ENCODE measurements at regions of chr9 and their contacts with region 1.

Region 1: GRCh38 chr9:94681508-94681907 is 42.2 kb upstream of the FBP1 start:
- DNase-seq: peak; percentile 62
- H3K4me3 ChIP-seq: no peak overlapping the region
- H3K27ac ChIP-seq: no peak overlapping the region
- H3K27me3 ChIP-seq: no peaks in the 10 kb centered on the region
- CTCF ChIP-seq: peak; percentile 78

Region 2: GRCh38 chr9:94697972-94698581 is 16.6 kb after region 1 on chr9:
- CTCF ChIA-PET with region 1: interaction called, 13 read pairs
- POLR2A ChIA-PET with region 1: no interaction called
- DNase-seq: no peak
- H3K4me3 ChIP-seq: no peak overlapping the region
- H3K27ac ChIP-seq: no peak overlapping the region
- H3K27me3 ChIP-seq: no peaks in the 10 kb centered on the region
- CTCF ChIP-seq: no peak

Region 3: GRCh38 chr9:94772639-94773303 is 91.3 kb after region 1 on chr9:
- CTCF ChIA-PET with region 1: interaction called, 11 read pairs
- POLR2A ChIA-PET with region 1: no interaction called
- DNase-seq: peak; percentile 72
- H3K4me3 ChIP-seq: no peak overlapping the region
- H3K27ac ChIP-seq: peak overlapping the region; percentile 40
- H3K27me3 ChIP-seq: no peaks in the 10 kb centered on the region
- CTCF ChIP-seq: no peak

Region 4: GRCh38 chr9:94996641-94997040 is 315.1 kb after region 1 on chr9:
- CTCF ChIA-PET with region 1: interaction called, 10 read pairs
- POLR2A ChIA-PET with region 1: no interaction called
- DNase-seq: no peak
- H3K4me3 ChIP-seq: no peak overlapping the region
- H3K27ac ChIP-seq: peak overlapping the region; percentile 76
- H3K27me3 ChIP-seq: no peaks in the 10 kb centered on the region
- CTCF ChIP-seq: no peak

Region 5: GRCh38 chr9:95025213-95026147 is 344.0 kb after region 1 on chr9:
- CTCF ChIA-PET with region 1: interaction called, 12 read pairs
- POLR2A ChIA-PET with region 1: interaction called, 3 read pairs
- DNase-seq: peak; percentile 68
- H3K4me3 ChIP-seq: no peak overlapping the region
- H3K27ac ChIP-seq: peak overlapping the region; percentile 63
- H3K27me3 ChIP-seq: no peaks in the 10 kb centered on the region
- CTCF ChIP-seq: peak; percentile 52

Region 6: GRCh38 chr9:95127249-95128176 is 446.0 kb after region 1 on chr9:
- CTCF ChIA-PET with region 1: interaction called, 238 read pairs
- POLR2A ChIA-PET with region 1: no interaction called
- DNase-seq: peak; percentile 46
- H3K4me3 ChIP-seq: peak overlapping the region; percentile 50
- H3K27ac ChIP-seq: no peak overlapping the region
- H3K27me3 ChIP-seq: no peaks in the 10 kb centered on the region
- CTCF ChIP-seq: peak; percentile 98

Measured in AG04450 (cell line).